ENCODE measurements at regions of chr4 and their contacts with region 1.

Region 1: DNA sequence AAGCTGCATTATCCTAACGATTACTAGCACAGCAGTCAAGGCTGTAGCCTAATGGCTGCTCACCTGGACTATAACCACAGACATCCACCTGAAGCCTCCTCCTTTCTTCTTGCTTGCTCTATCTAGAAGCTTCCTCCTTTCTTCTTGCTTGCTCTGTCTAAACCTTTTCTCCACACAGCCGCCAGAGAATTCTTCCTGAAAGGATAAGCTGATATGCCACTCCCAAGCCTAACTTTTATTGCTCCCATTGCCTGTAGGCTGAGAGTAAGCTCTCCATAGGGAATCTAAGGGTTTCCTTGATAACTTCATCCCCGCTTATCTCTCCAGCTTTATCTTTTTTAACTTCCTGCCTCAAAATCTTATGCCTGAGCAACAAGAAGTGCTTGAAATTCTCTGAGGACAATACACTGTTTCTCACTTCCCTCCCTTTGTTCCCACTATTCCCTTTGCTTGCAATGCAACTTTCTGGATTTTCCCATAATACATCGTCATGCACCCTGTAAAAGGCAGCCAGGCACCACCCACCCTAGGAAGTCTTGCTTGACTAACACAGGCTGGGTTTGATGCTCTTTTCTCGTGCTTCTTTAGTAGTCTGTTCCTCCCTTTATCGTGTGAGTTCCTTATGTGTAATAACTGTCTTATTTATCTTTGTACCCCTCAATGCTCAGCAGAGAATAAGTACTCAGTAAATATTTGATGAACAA is 1.4 kb upstream of the LRIT3 start:
- DNase-seq: no peak
- ATAC-seq: no peak
- H3K4me3 ChIP-seq: no peak overlapping the region
- H3K27ac ChIP-seq: no peak overlapping the region
- H3K4me1 ChIP-seq: no peaks in the 10 kb centered on the region
- H3K27me3 ChIP-seq: no peaks in the 10 kb centered on the region
- CTCF ChIP-seq: no peak

Region 2: GRCh38 chr4:108683479-108683878 is 1163.1 kb before region 1 on chr4:
- intact Hi-C with region 1: loop called in 1 of 2 experiments (anchors 10 kb)
- DNase-seq: no peak
- ATAC-seq: peak in 1 of 4 donors; percentile 62
- H3K4me3 ChIP-seq: no peak overlapping the region
- H3K27ac ChIP-seq: no peak overlapping the region
- H3K4me1 ChIP-seq: no peaks in the 10 kb centered on the region
- H3K27me3 ChIP-seq: no peaks in the 10 kb centered on the region
- CTCF ChIP-seq: peak; percentile 34

Measured in psoas muscle (tissue), 8 donors.